WTC11 (cell line): ENCODE measurements at regions of chr19 and their contacts with region 1.

Region 1: GRCh38 chr19:21463449-21464105 is 41.8 kb upstream of the ZNF429 start:
- DNase-seq: peak; percentile 85
- ATAC-seq: peak; percentile 99
- H3K4me3 Mint-ChIP-seq: peak overlapping the region; percentile 100
- H3K27ac Mint-ChIP-seq: peak overlapping the region; percentile 99
- H3K4me1 Mint-ChIP-seq: peaks cover 9% of the 10 kb centered on the region; the same call in 1 of the 2 replicates
- H3K27me3 Mint-ChIP-seq: peaks cover 8% of the 10 kb centered on the region
- CTCF ChIP-seq: no peak

Region 2: DNA sequence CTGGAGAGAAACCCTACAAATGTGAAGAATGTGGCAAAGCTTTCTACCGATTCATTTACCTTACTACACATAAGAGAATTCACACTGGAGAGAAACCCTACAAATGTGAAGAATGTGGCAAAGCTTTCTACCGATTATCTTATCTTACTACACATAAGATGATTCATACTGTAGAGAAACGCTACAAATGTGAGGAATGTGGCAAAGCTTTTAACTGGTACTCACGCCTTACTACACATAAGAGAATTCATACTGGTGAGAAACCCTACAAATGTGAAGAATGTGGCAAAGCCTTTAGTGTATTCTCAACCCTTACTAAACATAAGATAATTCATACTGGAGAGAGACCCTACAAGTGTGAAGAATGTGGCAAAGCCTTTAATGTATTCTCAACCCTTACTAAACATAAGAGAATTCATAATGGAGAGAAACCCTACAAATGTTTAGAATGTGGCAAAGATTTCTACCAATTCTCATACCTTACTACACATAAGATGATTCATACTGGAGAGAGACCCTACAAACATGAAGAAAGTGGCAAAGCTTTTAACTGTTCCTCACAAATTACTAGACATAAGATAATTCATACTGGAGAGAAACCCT is 79.5 kb before region 1 on chr19:
- CTCF ChIA-PET with region 1: no interaction called
- POLR2A ChIA-PET with region 1: no interaction called
- DNase-seq: no peak
- ATAC-seq: no peak
- H3K4me3 Mint-ChIP-seq: no peak overlapping the region
- H3K27ac Mint-ChIP-seq: no peak overlapping the region
- H3K4me1 Mint-ChIP-seq: no peaks in the 10 kb centered on the region
- H3K27me3 Mint-ChIP-seq: peaks cover 52% of the 10 kb centered on the region
- CTCF ChIP-seq: no peak

Region 3: DNA sequence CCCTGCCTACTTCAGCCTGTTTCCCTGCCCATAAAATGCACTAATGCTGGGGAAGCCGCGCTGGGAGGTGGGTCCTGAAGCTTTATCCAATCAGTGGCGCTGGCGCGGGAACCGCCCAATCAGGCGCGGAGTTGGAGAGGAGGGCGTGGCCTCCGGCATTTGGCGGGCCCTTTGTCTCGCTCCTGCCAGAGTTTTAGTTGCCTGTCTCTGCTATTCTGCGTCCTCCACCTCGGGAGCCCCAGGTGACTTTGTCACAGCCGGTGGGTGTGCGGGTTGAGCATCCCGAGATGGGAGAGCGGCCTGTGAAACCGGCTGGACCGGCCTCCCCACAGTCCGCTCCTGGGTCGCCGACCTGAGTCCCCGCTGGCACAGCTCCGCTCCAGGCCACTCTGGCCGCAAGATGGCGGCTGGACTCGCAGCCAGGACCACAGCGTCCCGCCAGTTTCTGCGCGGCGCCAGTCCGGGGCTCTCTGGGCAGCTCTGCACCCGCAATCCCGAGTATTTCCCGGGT is 11.1 kb after region 1 on chr19:
- CTCF ChIA-PET with region 1: interaction called, 6 read pairs
- POLR2A ChIA-PET with region 1: interaction called, 17 read pairs
- DNase-seq: peak; percentile 85
- ATAC-seq: peak; percentile 96
- H3K4me3 Mint-ChIP-seq: peak overlapping the region; percentile 74
- H3K27ac Mint-ChIP-seq: 0 out of 2 replicates have a peak overlapping the region, but pooled peaks have one; percentile 45
- H3K4me1 Mint-ChIP-seq: 0 out of 2 replicates have a peak, but pooled peaks cover 3% of the 10 kb centered on the region
- H3K27me3 Mint-ChIP-seq: peaks cover 3% of the 10 kb centered on the region
- CTCF ChIP-seq: no peak

Region 4: DNA sequence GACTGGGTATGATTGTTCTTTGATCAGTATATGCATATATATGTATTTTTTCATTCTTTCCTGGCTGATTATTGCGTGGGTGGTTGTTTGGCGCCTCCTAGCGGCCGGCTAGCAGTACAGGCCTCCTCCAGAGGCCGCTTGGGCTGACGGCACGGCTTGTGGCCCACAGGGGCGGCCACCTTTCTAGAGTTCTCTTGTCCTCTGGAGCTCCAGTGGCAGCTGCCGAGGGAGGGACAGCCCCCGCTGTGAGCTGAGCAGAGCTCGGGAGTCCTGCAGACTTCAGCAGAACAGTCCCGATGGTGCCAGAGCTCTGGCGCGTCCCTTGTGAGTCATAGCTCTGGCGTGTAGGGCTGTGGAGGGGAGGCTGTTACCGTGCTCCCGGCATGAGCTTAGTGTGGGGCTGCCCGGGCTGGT is 19.3 kb after region 1 on chr19:
- CTCF ChIA-PET with region 1: interaction called, 18 read pairs
- POLR2A ChIA-PET with region 1: interaction called, 3 read pairs
- DNase-seq: peak; percentile 72
- ATAC-seq: peak; percentile 84
- H3K4me3 Mint-ChIP-seq: no peak overlapping the region
- H3K27ac Mint-ChIP-seq: no peak overlapping the region
- H3K4me1 Mint-ChIP-seq: no peaks in the 10 kb centered on the region
- H3K27me3 Mint-ChIP-seq: peaks cover 5% of the 10 kb centered on the region
- CTCF ChIP-seq: peak; percentile 91

Region 5: GRCh38 chr19:21505459-21506451 is 42.2 kb after region 1 on chr19 and contains the start of gene ZNF429:
- CTCF ChIA-PET with region 1: interaction called, 4 read pairs
- POLR2A ChIA-PET with region 1: interaction called, 10 read pairs
- DNase-seq: peak; percentile 89
- ATAC-seq: peak; percentile 99
- H3K4me3 Mint-ChIP-seq: peak within 1 kb of the TSS; percentile 99
- H3K27ac Mint-ChIP-seq: peak within 1 kb of the TSS; percentile 99
- H3K4me1 Mint-ChIP-seq: peaks cover 2% of the 10 kb centered on the region; the same call in 1 of the 2 replicates
- H3K27me3 Mint-ChIP-seq: no peaks in the 10 kb centered on the region
- CTCF ChIP-seq: no peak
- total RNA-seq, gene ZNF429: 7.7 to 9.2 TPM (median 9.1 TPM) in 3 replicates